PC-3 (cell line): ENCODE measurements at regions of chr11 and their contacts with region 1.

Region 1: GRCh38 chr11:67095214-67095507 is 23.9 kb upstream of the KDM2A start:
- DNase-seq: no peak
- ATAC-seq: no peak
- H3K4me3 ChIP-seq: no peak overlapping the region
- H3K27ac ChIP-seq: no peak overlapping the region
- H3K4me1 ChIP-seq: no peaks in the 10 kb centered on the region
- H3K27me3 ChIP-seq: no peaks in the 10 kb centered on the region
- CTCF ChIP-seq: no peak; the same call in 1 of the 2 replicates

Region 2: GRCh38 chr11:66810576-66811185 is 284.5 kb before region 1 on chr11:
- CTCF ChIA-PET with region 1: no interaction called
- POLR2A ChIA-PET with region 1: no interaction called
- intact Hi-C with region 1: no loop called
- DNase-seq: no peak
- ATAC-seq: no peak
- H3K4me3 ChIP-seq: no peak overlapping the region
- H3K27ac ChIP-seq: no peak overlapping the region
- H3K4me1 ChIP-seq: peaks cover 20% of the 10 kb centered on the region
- H3K27me3 ChIP-seq: no peaks in the 10 kb centered on the region
- CTCF ChIP-seq: no peak

Region 3: GRCh38 chr11:67118801-67119584 is 23.8 kb after region 1 on chr11 and contains the start of gene KDM2A:
- CTCF ChIA-PET with region 1: interaction called, 11 read pairs
- POLR2A ChIA-PET with region 1: no interaction called
- intact Hi-C with region 1: no loop called
- DNase-seq: peak; percentile 99
- ATAC-seq: peak; percentile 82
- H3K4me3 ChIP-seq: peak within 1 kb of the TSS; percentile 97
- H3K27ac ChIP-seq: peak within 1 kb of the TSS; percentile 34; the same call in 1 of the 2 replicates
- H3K4me1 ChIP-seq: peaks cover 6% of the 10 kb centered on the region; the same call in 1 of the 2 replicates
- H3K27me3 ChIP-seq: no peaks in the 10 kb centered on the region
- CTCF ChIP-seq: no peak
- total RNA-seq, gene KDM2A: 65.3 and 87.1 TPM in 2 replicates